B cell (primary cell): ENCODE measurements at regions of chr11 and their contacts with region 1.

Region 1: GRCh38 chr11:117232092-117232878 is at the start of gene RNF214:
- DNase-seq: peak; percentile 89
- ATAC-seq: peak; percentile 78
- H3K4me3 ChIP-seq: peak within 1 kb of the TSS; percentile 64 to 99 (median 91)
- H3K4me3 Mint-ChIP-seq: peak within 1 kb of the TSS; percentile 95
- H3K27ac ChIP-seq: peak within 1 kb of the TSS; percentile 82 to 84
- H3K27ac Mint-ChIP-seq: peak within 1 kb of the TSS; percentile 99
- H3K4me1 ChIP-seq: peaks cover 34 to 38% of the 10 kb centered on the region in 2 donors
- H3K4me1 Mint-ChIP-seq: peaks cover 48% of the 10 kb centered on the region
- H3K27me3 ChIP-seq: no peaks in the 10 kb centered on the region
- H3K27me3 Mint-ChIP-seq: no peaks in the 10 kb centered on the region
- CTCF ChIP-seq: peak; percentile 83
- total RNA-seq, gene RNF214: 33.6 and 36.1 TPM in 2 replicates

Region 2: GRCh38 chr11:116772443-116773202 is 459.7 kb before region 1 on chr11 and contains the start of gene BUD13:
- CTCF ChIA-PET with region 1: interaction called, 4 read pairs
- POLR2A ChIA-PET with region 1: interaction called, 5 read pairs
- intact Hi-C with region 1: loop called (anchors 2 kb)
- DNase-seq: peak; percentile 96
- ATAC-seq: peak; percentile 89
- H3K4me3 ChIP-seq: peak within 1 kb of the TSS; percentile 71 to 99 (median 95)
- H3K4me3 Mint-ChIP-seq: peak within 1 kb of the TSS; percentile 93
- H3K27ac ChIP-seq: peak within 1 kb of the TSS; percentile 85 to 96
- H3K27ac Mint-ChIP-seq: peak within 1 kb of the TSS; percentile 93
- H3K4me1 ChIP-seq: peaks cover 23 to 28% of the 10 kb centered on the region in 2 donors
- H3K4me1 Mint-ChIP-seq: peaks cover 34% of the 10 kb centered on the region
- H3K27me3 ChIP-seq: no peaks in the 10 kb centered on the region
- H3K27me3 Mint-ChIP-seq: no peaks in the 10 kb centered on the region
- CTCF ChIP-seq: no peak
- total RNA-seq, gene BUD13: 24.2 and 24.8 TPM in 2 replicates